GM12878 (cell line): ENCODE measurements at regions of chr11 and their contacts with region 1.

Region 1: GRCh38 chr11:76610871-76611475 is 59.6 kb downstream of the LRRC32 start:
- DNase-seq: no peak
- ATAC-seq: peak; percentile 78
- H3K4me3 ChIP-seq: no peak overlapping the region
- H3K27ac ChIP-seq: no peak overlapping the region
- H3K4me1 ChIP-seq: no peaks in the 10 kb centered on the region
- H3K27me3 ChIP-seq: no peaks in the 10 kb centered on the region
- CTCF ChIP-seq: peak in 1 of 3 experiments; percentile 48; a peak in 2 of 6 replicates
- EP300 ChIP-seq: no peak
- POLR2A ChIP-seq: no peak
- RAD21 ChIP-seq: no peak

Region 2: GRCh38 chr11:75946531-75947530 is 664.1 kb before region 1 on chr11:
- CTCF ChIA-PET with region 1: no interaction called
- POLR2A ChIA-PET with region 1: no interaction called
- RAD21 ChIA-PET with region 1: no interaction called
- SMC1A ChIA-PET with region 1: no interaction called
- in situ Hi-C with region 1: no loop called
- intact Hi-C with region 1: no loop called
- DNase-seq: no peak
- ATAC-seq: peak; percentile 71
- H3K4me3 ChIP-seq: no peak overlapping the region
- H3K27ac ChIP-seq: peak overlapping the region; percentile 50
- H3K4me1 ChIP-seq: peaks cover 21% of the 10 kb centered on the region
- H3K27me3 ChIP-seq: no peaks in the 10 kb centered on the region
- CTCF ChIP-seq: no peak
- EP300 ChIP-seq: no peak
- POLR2A ChIP-seq: no peak
- RAD21 ChIP-seq: no peak

Region 3: GRCh38 chr11:76680518-76681425 is 69.8 kb after region 1 on chr11:
- CTCF ChIA-PET with region 1: interaction called, 26 read pairs
- POLR2A ChIA-PET with region 1: no interaction called
- RAD21 ChIA-PET with region 1: interaction called, 31 read pairs
- SMC1A ChIA-PET with region 1: interaction called, 11 read pairs
- in situ Hi-C with region 1: no loop called
- intact Hi-C with region 1: no loop called
- DNase-seq: no peak
- ATAC-seq: peak; percentile 91
- H3K4me3 ChIP-seq: no peak overlapping the region
- H3K27ac ChIP-seq: no peak overlapping the region
- H3K4me1 ChIP-seq: peaks cover 7% of the 10 kb centered on the region
- H3K27me3 ChIP-seq: no peaks in the 10 kb centered on the region; a peak in 1 of 4 replicates
- CTCF ChIP-seq: peak; percentile 71 to 92 (median 87); a peak in 5 of 6 replicates
- EP300 ChIP-seq: no peak
- POLR2A ChIP-seq: no peak
- RAD21 ChIP-seq: peak; percentile 92